Prostate gland (tissue), 2 donors: ENCODE measurements at regions of chr1 and their contacts with region 1.

Region 1: DNA sequence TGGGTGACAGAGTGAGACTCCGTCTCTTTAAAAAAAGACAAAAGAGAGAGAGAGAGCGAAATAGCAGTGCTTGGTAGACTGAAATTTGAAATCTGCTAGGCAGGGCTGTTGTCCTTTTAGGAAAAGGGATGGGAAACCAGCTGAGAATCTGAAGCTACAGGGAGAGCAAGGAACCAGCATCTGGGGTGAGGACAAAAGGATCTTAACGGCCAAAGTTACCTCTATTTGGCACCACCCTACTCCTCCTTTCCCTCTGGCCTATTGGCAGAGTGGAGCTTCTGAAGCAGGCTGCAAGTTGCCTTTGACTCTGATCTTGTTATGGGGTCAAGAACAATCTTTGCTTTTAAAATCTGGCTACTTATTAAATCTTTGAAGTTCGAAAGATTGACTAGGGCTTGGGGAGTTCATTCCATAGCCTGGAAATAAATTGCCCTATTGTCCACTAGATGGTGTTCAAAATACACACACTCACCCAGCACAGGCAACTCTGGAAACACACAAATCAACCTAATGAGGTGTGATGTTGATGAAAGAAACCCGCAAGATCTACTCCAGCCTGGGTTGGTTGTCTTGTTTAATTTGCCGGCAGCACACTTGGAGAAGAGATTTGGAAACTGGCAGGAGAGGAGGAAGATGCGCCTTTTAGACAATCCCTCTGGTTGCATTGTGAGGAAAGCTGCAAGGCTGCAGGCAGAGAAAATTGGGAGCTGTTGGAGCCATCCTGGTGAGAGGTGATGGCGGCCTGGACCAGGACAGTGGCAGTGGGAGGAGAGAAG is 16.5 kb upstream of the PARP1 start:
- DNase-seq: no peak
- H3K4me3 ChIP-seq: no peak overlapping the region
- H3K27ac ChIP-seq: no peak overlapping the region
- H3K4me1 ChIP-seq: no peaks in the 10 kb centered on the region
- H3K27me3 ChIP-seq: no peaks in the 10 kb centered on the region
- CTCF ChIP-seq: peak in 3 of 4 experiments; percentile 41 to 76 (median 60)
- POLR2A ChIP-seq: no peak

Region 2: DNA sequence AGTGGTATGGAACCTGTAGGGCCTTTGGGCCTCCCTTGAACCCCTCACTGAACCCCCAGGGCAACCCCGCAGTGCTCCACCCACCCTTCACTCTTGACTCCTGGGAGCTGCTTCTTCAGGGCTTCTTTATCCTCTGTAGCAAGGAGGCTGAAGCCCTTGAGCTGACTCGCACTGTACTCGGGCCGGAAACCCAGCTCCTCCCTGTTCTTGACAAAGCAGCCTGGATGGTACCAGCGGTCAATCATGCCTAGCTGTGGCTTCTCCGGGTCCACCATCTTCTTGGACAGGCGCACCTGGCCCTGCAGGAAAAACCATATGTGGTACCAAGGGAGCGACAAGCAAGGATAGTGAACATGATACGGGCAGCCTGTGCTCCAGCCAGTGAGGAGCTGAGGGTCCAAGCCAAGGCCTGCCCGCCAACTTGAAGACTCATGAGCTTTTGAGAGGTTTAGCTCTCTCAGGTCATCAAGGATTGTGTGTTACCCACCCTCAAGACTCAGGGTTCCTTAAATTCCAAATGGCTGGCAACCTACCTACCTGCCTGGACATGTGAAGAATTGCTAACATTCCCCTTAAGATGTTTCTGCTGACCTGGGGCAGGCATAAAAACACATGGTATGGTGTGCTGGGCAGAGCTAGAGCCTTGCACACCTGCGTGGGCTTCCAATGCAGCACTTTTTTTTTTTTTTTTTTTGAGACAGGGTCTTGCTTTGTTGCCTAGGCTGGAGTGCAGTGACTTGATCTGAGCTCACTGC is 33.9 kb before region 1 on chr1:
- intact Hi-C with region 1: no loop called
- DNase-seq: no peak
- H3K4me3 ChIP-seq: no peak overlapping the region
- H3K27ac ChIP-seq: no peak overlapping the region
- H3K4me1 ChIP-seq: no peaks in the 10 kb centered on the region
- H3K27me3 ChIP-seq: no peaks in the 10 kb centered on the region
- CTCF ChIP-seq: no peak
- POLR2A ChIP-seq: no peak

Region 3: DNA sequence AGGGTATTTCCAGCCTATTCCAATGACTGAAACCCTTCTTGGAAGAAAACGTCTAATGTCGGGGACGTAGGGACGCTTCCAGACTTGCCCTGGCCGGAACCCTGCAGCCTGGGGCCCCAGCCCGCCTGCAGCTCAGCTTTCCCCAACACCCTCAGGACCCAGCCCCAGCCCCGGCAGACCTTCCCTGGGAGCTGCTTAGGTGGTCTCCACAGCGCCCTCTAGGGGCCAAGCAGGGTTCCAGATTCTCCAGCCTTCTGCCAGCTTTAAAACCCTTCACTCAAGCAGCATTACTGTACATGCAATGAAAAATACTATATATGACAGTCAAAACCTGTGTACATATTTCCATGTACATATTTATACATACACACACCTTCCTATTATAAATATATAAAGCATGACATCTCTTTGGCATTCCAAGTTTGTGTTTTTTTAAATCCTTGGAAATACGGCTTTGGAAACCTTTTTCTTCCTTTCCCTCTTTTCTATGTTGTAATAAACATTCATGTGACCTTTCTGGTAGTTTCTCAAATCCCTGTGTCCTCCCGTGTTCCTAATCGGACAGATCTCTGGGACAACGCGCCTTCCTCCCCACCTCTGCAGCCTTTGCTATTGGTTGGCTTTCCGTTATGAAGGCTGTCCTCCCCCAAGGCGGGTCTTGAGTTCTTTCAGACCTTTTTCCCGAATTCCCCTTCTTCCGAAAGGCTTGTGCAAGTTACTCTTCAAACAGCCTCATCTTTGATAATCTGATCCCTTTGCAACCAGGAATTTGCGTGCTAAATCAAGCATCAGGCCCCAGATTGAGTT is 184.5 kb after region 1 on chr1:
- intact Hi-C with region 1: loop called (anchors 10 kb)
- DNase-seq: peak; percentile 36
- H3K4me3 ChIP-seq: no peak overlapping the region
- H3K27ac ChIP-seq: no peak overlapping the region
- H3K4me1 ChIP-seq: no peaks in the 10 kb centered on the region
- H3K27me3 ChIP-seq: no peaks in the 10 kb centered on the region
- CTCF ChIP-seq: peak; percentile 35 to 65 (median 62)
- POLR2A ChIP-seq: no peak

Region 4: GRCh38 chr1:226634166-226634588 is 209.8 kb after region 1 on chr1:
- intact Hi-C with region 1: loop called (anchors 10 kb)
- DNase-seq: peak; percentile 79
- H3K4me3 ChIP-seq: no peak overlapping the region
- H3K27ac ChIP-seq: peak overlapping the region; percentile 26 to 47
- H3K4me1 ChIP-seq: peaks cover 18% of the 10 kb centered on the region
- H3K27me3 ChIP-seq: no peaks in the 10 kb centered on the region
- CTCF ChIP-seq: peak; percentile 90 to 96 (median 94)
- POLR2A ChIP-seq: no peak

Region 5: DNA sequence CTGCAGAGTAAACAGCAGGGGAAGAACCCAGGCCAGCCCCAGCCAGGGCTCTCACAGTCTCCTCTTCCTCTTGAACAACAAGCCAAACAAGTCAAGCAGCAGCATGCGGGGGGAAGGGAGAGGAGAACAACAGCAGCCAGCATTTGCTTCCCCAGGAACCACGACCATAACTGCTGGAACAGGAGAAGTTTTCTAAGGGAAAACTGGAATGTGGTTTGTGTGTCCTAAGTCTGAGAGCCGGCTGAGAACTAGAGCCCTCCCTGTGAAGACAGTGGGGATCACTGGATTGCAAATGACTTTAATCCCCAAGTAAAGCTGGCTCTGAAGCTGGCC is 563.9 kb after region 1 on chr1:
- intact Hi-C with region 1: no loop called
- DNase-seq: peak; percentile 89
- H3K4me3 ChIP-seq: no peak overlapping the region
- H3K27ac ChIP-seq: peak overlapping the region; percentile 66 to 81
- H3K4me1 ChIP-seq: peaks cover 22% of the 10 kb centered on the region
- H3K27me3 ChIP-seq: no peaks in the 10 kb centered on the region
- CTCF ChIP-seq: no peak
- POLR2A ChIP-seq: no peak